ENCODE measurements at regions of chr7 and their contacts with region 1.

Region 1: DNA sequence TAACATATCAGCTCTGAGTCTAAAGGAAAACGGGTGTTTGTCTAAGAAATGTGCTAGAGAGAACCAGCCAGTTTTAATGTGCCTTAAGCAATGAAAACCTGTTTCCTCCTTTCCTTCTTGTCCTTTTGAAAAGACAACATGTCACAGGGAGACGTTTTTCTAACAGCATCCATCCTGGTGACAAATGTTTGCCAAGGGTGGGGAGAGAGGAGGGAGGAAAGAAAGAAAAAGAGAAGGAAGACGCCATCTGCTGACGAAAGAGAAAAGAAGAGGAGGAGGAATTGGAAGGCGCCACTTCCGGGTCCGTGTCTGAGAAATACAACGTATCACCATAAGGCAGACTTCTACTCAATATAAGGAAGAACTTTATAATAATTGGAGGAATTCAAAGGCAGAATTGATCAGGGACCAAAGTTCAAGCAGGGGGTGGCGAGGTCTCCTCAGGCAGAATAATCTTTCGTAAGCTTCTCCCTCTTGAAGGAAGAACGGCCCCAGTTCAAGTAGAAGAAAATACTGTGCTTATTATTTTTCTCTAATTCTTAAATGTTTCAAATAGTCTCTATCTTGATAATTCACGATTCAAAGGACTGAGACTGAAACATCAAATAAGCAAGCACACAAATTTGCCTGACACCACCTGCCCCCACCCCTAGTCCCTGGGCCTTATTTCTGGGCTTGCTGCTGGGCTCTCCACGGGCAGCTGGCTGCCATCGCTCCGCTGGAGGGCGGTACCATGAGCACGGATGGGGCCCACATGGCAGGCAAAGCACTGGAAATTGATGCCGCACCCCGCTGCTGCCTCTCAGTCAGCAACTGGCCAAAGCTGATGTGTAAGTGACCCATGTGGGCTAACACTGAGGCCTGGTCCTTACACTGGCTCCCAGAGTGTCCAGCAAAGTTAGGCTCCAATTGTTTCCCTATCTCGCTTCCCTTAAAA is 273.7 kb upstream of the KLF14 start:
- DNase-seq: peak; percentile 89
- H3K4me3 Mint-ChIP-seq: peak overlapping the region; percentile 41
- H3K27ac Mint-ChIP-seq: peak overlapping the region; percentile 86
- H3K4me1 Mint-ChIP-seq: peaks cover 54% of the 10 kb centered on the region
- H3K27me3 Mint-ChIP-seq: no peaks in the 10 kb centered on the region

Region 2: DNA sequence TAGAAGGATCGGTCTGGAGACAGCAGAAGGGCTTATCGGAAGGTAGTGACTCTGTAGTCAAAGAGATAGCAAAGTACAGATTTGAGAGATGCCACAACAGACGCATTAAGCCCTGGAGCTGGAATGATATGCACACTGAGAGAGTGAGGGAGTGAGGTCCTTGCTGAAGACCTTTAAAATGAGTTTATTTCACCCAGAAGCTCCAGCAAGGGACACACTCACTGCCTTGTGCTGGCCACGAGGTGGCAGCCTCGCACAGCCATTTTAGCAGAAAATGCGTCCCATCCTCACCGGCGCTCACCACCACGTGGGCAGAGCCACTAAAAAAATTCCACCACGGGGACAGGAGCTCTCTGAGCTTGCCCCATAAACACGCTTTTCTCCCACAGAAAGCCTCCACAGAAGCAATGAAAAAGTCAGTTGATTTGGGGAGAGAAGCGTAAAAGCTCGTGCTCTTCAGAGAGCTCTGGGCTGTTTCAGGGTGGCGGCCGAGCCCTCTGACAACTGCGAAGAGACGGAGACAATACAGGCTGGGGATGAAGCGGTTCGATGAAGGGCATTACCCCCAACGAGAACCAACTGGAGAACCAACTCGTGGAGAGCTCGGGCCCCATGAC is 110.7 kb before region 1 on chr7:
- intact Hi-C with region 1: loop called (anchors 1 kb)
- DNase-seq: peak; percentile 91
- H3K4me3 Mint-ChIP-seq: peak overlapping the region; percentile 48
- H3K27ac Mint-ChIP-seq: peak overlapping the region; percentile 95
- H3K4me1 Mint-ChIP-seq: peaks cover 82% of the 10 kb centered on the region
- H3K27me3 Mint-ChIP-seq: no peaks in the 10 kb centered on the region

Region 3: GRCh38 chr7:130970696-130971095 is 37.0 kb before region 1 on chr7:
- intact Hi-C with region 1: loop called (anchors 1 kb)
- DNase-seq: no peak
- H3K4me3 Mint-ChIP-seq: peak overlapping the region; percentile 64
- H3K27ac Mint-ChIP-seq: peak overlapping the region; percentile 96
- H3K4me1 Mint-ChIP-seq: peaks cover 57% of the 10 kb centered on the region
- H3K27me3 Mint-ChIP-seq: no peaks in the 10 kb centered on the region

Region 4: GRCh38 chr7:130996841-130997231 is 10.8 kb before region 1 on chr7:
- intact Hi-C with region 1: loop called (anchors 1 kb)
- DNase-seq: peak; percentile 73
- H3K4me3 Mint-ChIP-seq: peak overlapping the region; percentile 70
- H3K27ac Mint-ChIP-seq: peak overlapping the region; percentile 91
- H3K4me1 Mint-ChIP-seq: peaks cover 56% of the 10 kb centered on the region
- H3K27me3 Mint-ChIP-seq: no peaks in the 10 kb centered on the region

Region 5: GRCh38 chr7:131027287-131027773 is 19.7 kb after region 1 on chr7:
- intact Hi-C with region 1: loop called (anchors 1 kb)
- DNase-seq: peak; percentile 76
- H3K4me3 Mint-ChIP-seq: peak overlapping the region; percentile 40
- H3K27ac Mint-ChIP-seq: peak overlapping the region; percentile 83
- H3K4me1 Mint-ChIP-seq: peaks cover 56% of the 10 kb centered on the region
- H3K27me3 Mint-ChIP-seq: no peaks in the 10 kb centered on the region

Region 6: GRCh38 chr7:131090886-131091692 is 83.4 kb after region 1 on chr7:
- intact Hi-C with region 1: no loop called
- DNase-seq: no peak
- H3K4me3 Mint-ChIP-seq: no peak overlapping the region
- H3K27ac Mint-ChIP-seq: no peak overlapping the region
- H3K4me1 Mint-ChIP-seq: peaks cover 11% of the 10 kb centered on the region
- H3K27me3 Mint-ChIP-seq: no peaks in the 10 kb centered on the region

Region 7: DNA sequence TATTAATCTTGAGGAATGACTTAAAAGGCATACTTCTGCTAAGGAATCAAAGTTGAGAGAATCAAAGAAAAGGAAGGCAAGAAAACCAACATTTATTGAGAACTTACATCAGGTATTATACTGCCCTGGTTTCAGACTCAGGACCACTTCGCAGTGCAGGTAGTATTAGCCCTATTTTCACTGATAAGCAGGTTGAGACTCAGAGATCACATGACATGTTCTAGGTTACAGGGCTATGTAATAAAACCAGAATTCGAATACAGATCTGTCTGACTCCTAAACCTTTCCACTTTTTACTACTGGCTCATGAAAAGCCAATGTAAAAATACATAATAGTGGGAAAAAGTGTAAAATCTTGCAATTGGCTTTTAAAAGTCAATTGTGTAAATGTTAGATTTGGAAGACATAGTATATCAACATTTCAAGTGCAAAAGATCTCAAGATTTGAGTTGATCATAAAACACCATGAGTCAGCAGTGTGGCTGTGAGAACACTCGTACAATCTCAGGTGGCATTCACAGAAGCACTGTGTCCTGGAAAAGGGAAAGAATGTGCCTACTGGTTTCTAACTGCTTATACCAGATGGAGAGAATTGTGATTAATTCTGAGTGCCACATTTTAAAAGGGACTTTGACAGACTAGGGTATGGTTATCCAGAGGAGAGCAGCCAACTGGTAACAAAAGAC is 124.2 kb after region 1 on chr7:
- intact Hi-C with region 1: no loop called
- DNase-seq: no peak
- H3K4me3 Mint-ChIP-seq: no peak overlapping the region
- H3K27ac Mint-ChIP-seq: no peak overlapping the region
- H3K4me1 Mint-ChIP-seq: peaks cover 5% of the 10 kb centered on the region
- H3K27me3 Mint-ChIP-seq: no peaks in the 10 kb centered on the region

Region 8: GRCh38 chr7:131188367-131189339 is 181.0 kb after region 1 on chr7:
- intact Hi-C with region 1: loop called (anchors 2 kb)
- DNase-seq: peak; percentile 89
- H3K4me3 Mint-ChIP-seq: peak overlapping the region; percentile 38
- H3K27ac Mint-ChIP-seq: peak overlapping the region; percentile 90
- H3K4me1 Mint-ChIP-seq: peaks cover 47% of the 10 kb centered on the region
- H3K27me3 Mint-ChIP-seq: no peaks in the 10 kb centered on the region

Region 9: DNA sequence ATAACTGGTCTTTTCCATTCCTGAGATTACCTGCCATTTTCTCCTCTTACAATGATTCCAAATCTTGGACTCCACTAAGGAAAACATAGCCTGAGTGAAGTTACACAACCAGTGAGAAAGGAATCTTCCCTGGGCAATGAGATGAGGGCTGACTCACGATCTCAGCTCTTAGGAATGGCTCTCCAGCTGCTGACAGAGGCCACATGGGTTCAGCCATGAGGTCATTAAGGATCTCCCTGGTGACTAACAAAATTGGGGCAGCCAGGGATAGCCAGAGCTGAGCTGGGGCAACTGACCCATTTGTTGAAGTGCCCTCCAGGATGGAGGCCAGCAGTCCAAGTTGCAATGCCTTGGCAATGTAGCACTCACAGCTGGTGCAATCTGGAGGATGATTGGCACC is 241.3 kb after region 1 on chr7:
- intact Hi-C with region 1: no loop called
- DNase-seq: no peak
- H3K4me3 Mint-ChIP-seq: no peak overlapping the region
- H3K27ac Mint-ChIP-seq: no peak overlapping the region
- H3K4me1 Mint-ChIP-seq: peaks cover 5% of the 10 kb centered on the region
- H3K27me3 Mint-ChIP-seq: peaks cover 9% of the 10 kb centered on the region